OCI-LY7 (cell line): ENCODE measurements at regions of chr12 and their contacts with region 1.

Region 1: GRCh38 chr12:12032851-12033588 is 37.7 kb upstream of the BCL2L14 start:
- DNase-seq: peak; percentile 80
- H3K4me3 ChIP-seq: peak overlapping the region; percentile 52
- H3K27ac ChIP-seq: peak overlapping the region; percentile 51
- H3K4me1 ChIP-seq: peaks cover 39% of the 10 kb centered on the region
- CTCF ChIP-seq: peak; percentile 100

Region 2: GRCh38 chr12:11553871-11554533 is 479.0 kb before region 1 on chr12:
- CTCF ChIA-PET with region 1: interaction called, 3 read pairs
- POLR2A ChIA-PET with region 1: interaction called, 3 read pairs
- intact Hi-C with region 1: loop called (anchors 1 kb)
- DNase-seq: peak; percentile 78
- H3K4me3 ChIP-seq: no peak overlapping the region
- H3K27ac ChIP-seq: no peak overlapping the region
- H3K4me1 ChIP-seq: peaks cover 5% of the 10 kb centered on the region
- CTCF ChIP-seq: peak; percentile 84

Region 3: DNA sequence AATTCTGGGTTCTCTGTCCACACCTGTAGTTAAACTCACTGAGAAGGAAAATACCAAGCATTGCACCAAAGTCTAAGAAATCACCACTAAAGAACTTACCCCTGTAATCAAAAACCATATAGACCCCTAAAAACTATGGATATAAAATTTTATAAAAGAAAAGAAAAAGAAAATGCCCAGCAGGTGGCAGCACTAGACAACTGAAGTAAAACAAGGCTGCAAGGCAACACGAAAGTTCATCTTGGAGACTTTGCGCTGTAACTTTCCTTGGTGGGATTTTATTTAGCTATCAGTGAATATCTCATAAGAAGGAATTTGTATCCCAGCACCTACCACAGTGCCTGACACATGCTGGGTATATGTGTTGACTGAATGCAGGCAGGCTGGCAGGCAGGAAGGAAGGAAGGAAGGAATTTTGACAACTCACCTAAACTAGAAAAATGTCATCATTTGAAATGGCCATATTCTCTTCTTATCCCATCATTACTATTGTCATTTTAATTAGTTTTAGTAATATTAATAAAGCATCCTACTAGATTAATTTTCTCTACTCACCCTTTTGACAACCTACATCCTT is 451.8 kb before region 1 on chr12:
- CTCF ChIA-PET with region 1: interaction called, 24 read pairs
- POLR2A ChIA-PET with region 1: interaction called, 15 read pairs
- intact Hi-C with region 1: loop called (anchors 1 kb)
- DNase-seq: peak; percentile 86
- H3K4me3 ChIP-seq: no peak overlapping the region
- H3K27ac ChIP-seq: no peak overlapping the region
- H3K4me1 ChIP-seq: peaks cover 29% of the 10 kb centered on the region
- CTCF ChIP-seq: peak; percentile 82

Region 4: DNA sequence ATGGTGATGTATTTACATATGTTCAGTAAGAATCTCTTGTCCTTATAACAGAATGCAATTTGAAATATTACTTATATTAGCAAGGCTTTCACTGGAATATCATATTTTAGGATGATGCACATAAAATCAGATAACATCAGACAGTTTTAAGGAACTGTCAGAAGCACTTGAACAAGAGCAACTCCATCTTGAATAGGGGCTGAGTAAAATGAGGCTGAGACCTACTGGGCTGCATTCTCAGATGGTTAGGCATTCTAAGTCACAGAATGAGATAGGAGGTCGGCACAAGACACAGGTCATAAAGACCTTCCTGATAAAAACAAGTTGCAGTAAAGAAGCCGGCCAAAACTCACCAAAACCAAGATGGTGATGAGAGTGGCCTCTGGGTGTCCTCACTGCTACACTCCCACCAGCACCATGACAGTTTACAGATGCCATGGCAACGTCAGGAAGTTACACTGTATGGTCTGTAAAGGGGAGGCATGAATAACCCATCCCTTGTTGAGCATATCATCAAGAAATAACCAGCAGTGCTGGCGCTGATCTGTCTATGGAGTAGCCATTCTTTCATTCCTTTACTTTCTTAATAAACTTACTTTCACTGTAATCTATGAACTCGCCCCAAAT is 411.1 kb before region 1 on chr12:
- CTCF ChIA-PET with region 1: interaction called, 3 read pairs
- POLR2A ChIA-PET with region 1: interaction called, 6 read pairs
- intact Hi-C with region 1: loop called (anchors 1 kb)
- DNase-seq: peak; percentile 70
- H3K4me3 ChIP-seq: no peak overlapping the region
- H3K27ac ChIP-seq: peak overlapping the region; percentile 19
- H3K4me1 ChIP-seq: peaks cover 26% of the 10 kb centered on the region
- CTCF ChIP-seq: peak; percentile 72

Region 5: DNA sequence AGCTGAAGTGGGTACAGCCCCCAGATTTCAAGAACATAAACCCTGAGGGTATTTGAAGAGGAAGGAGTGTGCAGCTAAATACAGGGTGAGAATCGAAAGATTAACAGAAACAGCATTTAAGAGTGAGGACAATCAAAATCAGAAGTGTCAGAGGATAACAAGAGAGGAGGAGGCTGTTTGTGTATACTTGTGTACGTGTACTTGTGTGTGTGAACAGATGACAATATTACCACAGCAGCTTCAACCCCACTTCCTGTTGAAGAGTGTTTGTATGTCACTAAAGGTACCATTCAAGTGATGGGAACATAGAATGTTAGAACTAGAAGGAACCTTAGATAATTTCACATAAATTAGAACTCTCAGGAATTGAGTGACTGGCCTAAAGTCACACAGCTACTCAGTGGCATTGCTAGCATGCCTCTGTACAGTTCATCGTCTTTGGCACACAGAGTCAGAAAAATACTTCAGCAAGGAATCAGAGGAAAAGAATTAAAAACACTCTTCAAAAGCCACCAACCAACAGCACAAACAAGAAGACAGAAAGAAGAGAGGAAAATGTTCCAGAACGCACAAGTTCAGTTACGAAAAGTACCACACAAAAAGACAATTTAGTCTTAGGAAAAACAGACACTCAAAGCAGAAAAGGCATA is 126.6 kb before region 1 on chr12:
- CTCF ChIA-PET with region 1: no interaction called
- POLR2A ChIA-PET with region 1: no interaction called
- intact Hi-C with region 1: no loop called
- DNase-seq: no peak
- H3K4me3 ChIP-seq: no peak overlapping the region
- H3K27ac ChIP-seq: no peak overlapping the region
- H3K4me1 ChIP-seq: no peaks in the 10 kb centered on the region
- CTCF ChIP-seq: no peak

Region 6: DNA sequence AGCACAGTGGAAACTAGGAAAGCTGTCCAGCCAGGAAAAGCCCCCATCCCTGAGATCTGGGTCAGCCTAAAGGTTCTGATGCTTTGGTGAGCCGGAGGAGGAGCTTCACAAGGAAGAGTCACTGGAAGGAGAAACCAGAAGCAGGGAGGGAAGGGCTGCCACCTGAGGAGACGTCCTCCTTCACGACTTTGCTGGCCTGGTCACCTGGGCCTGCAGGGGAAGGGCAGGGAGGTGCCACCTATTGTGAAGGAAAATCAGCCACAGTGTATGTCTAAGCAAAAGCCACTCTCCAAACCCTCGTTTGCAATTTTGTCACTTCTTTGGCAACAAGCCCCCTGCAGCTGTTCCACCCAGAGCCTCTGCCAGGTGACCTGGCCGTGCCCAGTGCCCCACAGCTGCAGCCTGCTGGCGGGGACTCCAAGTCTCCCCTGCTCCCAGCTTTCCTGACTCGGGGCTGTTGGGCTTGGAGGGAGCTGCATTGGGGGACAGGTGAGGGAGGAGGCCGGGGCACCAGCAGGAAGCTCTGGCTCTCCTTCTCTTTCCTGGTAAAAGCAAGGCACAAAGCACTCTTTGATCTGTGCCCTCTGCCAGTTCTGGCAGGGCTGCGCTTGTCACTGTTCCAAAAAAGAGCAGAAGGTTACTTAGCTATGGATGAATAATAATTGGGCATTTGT is 83.1 kb before region 1 on chr12:
- CTCF ChIA-PET with region 1: no interaction called
- POLR2A ChIA-PET with region 1: no interaction called
- intact Hi-C with region 1: loop called (anchors 5 kb)
- DNase-seq: no peak
- H3K4me3 ChIP-seq: no peak overlapping the region
- H3K27ac ChIP-seq: no peak overlapping the region
- H3K4me1 ChIP-seq: peaks cover 11% of the 10 kb centered on the region
- CTCF ChIP-seq: no peak

Region 7: DNA sequence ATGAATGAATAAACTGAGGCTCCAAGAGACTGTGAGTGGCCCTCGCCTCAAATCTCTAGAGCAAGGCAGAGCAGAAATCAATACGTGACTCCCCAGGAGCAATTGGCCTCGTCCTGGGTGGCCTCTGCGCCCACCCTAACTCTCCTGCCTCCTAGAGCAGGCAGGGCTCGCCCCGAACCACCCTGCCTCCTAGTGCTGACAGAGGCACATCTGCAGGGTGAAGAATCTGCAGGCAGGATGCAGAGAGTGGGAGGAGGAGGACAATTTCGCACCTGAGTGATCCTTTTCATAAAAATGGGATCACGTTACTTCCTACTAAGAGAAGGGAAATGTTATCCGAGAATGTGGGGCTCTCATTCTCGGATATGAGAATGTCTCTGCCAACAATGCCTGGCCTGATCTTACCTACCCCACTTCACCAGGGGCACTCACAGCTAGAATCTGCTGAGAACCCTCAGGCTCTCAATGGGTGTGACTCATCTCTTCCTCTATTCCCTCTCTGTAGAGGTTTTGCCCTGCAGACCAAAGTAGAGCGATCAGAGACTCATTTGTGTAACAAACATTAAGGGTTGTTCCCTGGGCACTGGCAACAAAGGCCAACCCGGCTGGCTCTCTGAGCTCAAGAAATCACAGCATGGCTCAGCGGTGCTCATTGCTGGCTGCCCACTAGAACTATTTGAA is 23.9 kb before region 1 on chr12:
- CTCF ChIA-PET with region 1: interaction called, 7 read pairs
- POLR2A ChIA-PET with region 1: interaction called, 4 read pairs
- intact Hi-C with region 1: loop called (anchors 2 kb)
- DNase-seq: peak; percentile 78
- H3K4me3 ChIP-seq: no peak overlapping the region
- H3K27ac ChIP-seq: peak overlapping the region; percentile 67
- H3K4me1 ChIP-seq: peaks cover 58% of the 10 kb centered on the region
- CTCF ChIP-seq: no peak; the same call in 1 of the 2 replicates